ENCODE measurements at regions of chr17 and their contacts with region 1.

Region 1: DNA sequence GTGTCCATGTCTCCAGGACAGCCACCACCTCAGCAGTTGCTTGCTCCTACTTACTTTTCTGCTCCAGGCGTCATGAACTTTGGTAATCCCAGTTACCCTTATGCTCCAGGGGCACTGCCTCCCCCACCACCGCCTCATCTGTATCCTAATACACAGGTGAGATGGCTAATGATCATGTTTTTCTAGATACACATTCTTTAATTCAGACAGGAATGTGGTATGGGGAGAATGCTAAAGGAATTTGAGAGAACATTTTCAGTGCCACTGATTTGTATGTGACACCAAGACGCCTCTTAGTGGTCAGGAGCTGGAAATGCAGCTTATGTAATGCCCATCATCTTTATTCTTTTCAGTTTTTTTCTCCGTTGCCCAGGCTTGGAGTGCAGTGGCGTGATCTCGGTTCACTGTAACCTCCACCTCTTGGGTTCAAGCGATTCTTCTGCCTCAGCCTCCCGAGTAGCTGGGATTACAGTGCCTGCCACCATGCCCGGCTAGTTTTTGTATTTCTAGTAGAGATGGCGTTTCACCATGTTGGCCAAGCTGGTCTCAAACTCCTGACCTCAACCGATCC is 8.9 kb upstream of the RAPGEFL1 start:
- DNase-seq: peak; percentile 74
- ATAC-seq: peak; percentile 89
- H3K4me3 ChIP-seq: no peak overlapping the region
- H3K4me3 Mint-ChIP-seq: no peak overlapping the region
- H3K27ac ChIP-seq: no peak overlapping the region
- H3K27ac Mint-ChIP-seq: peak overlapping the region; percentile 53
- H3K4me1 ChIP-seq: no peaks in the 10 kb centered on the region
- H3K4me1 Mint-ChIP-seq: peaks cover 4% of the 10 kb centered on the region
- H3K27me3 ChIP-seq: no peaks in the 10 kb centered on the region
- H3K27me3 Mint-ChIP-seq: no peaks in the 10 kb centered on the region
- CTCF ChIP-seq: peak; percentile 77

Region 2: DNA sequence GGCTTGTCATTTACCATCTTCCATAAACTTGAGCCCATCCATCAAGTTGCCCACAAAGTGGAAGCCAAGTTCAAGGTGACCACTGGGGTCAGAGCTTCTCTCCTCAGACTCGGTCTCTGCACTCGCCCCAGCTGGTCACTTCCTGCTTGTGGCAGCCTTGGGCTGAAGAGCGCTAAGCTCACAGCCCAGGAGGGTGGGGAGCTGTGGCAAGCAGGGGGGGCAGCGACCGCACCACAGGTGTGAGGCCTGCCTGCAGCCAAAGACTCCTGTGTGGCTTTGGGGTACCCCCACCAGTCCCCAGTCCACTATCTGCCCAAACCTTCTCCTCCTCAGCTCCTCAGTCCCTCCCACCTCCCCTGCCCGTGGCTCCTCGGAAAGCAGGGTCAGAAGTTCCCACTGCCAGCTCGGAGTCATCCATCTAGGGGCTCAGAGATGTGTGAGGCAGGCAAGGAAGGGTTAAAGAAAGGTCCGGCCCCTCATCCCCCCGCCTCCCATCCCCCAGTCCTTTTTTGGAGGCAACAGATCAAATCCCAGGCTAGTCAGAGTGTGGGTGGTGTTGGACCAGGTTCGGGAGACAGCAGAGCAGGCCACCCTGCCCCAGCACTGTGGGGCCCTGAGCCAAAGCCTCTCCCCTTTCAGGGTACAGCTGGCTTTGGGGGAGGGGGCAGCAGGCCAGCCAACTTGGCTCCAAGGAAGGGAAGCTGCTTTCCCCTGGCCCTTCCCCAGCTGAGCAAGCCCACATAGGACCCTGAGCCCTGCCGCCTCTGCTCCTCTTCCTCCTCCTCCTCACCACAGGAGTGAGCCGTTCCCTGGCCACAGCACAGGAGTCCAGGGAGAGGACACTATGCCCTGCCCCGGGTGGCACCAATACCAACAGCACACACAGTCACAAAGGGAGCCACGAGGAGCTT is 149.9 kb before region 1 on chr17:
- CTCF ChIA-PET with region 1: interaction called, 17 read pairs
- POLR2A ChIA-PET with region 1: interaction called, 3 read pairs
- intact Hi-C with region 1: loop called (anchors 1 kb)
- DNase-seq: no peak
- ATAC-seq: no peak
- H3K4me3 ChIP-seq: no peak overlapping the region
- H3K4me3 Mint-ChIP-seq: no peak overlapping the region
- H3K27ac ChIP-seq: no peak overlapping the region
- H3K27ac Mint-ChIP-seq: no peak overlapping the region
- H3K4me1 ChIP-seq: peaks cover 0 to 3% of the 10 kb centered on the region in 2 donors
- H3K4me1 Mint-ChIP-seq: no peaks in the 10 kb centered on the region
- H3K27me3 ChIP-seq: no peaks in the 10 kb centered on the region
- H3K27me3 Mint-ChIP-seq: no peaks in the 10 kb centered on the region
- CTCF ChIP-seq: no peak

Region 3: GRCh38 chr17:40062329-40063186 is 105.8 kb before region 1 on chr17 and contains the start of gene THRA:
- CTCF ChIA-PET with region 1: interaction called, 7 read pairs
- POLR2A ChIA-PET with region 1: no interaction called
- intact Hi-C with region 1: loop called (anchors 2 kb)
- DNase-seq: peak; percentile 85
- ATAC-seq: peak; percentile 92
- H3K4me3 ChIP-seq: peak within 1 kb of the TSS; percentile 53 to 96 (median 95)
- H3K4me3 Mint-ChIP-seq: peak within 1 kb of the TSS; percentile 91
- H3K27ac ChIP-seq: peak within 1 kb of the TSS; percentile 59 to 67
- H3K27ac Mint-ChIP-seq: peak within 1 kb of the TSS; percentile 93
- H3K4me1 ChIP-seq: peaks cover 17 to 23% of the 10 kb centered on the region in 2 donors
- H3K4me1 Mint-ChIP-seq: peaks cover 39% of the 10 kb centered on the region
- H3K27me3 ChIP-seq: peaks cover 0 to 6% (median 1%) of the 10 kb centered on the region in 4 experiments
- H3K27me3 Mint-ChIP-seq: peaks cover 6% of the 10 kb centered on the region
- CTCF ChIP-seq: no peak
- total RNA-seq, gene THRA: 16.8 and 17.1 TPM in 2 replicates

Region 4: GRCh38 chr17:40121181-40122135 is 46.9 kb before region 1 on chr17 and contains the start of gene MSL1:
- CTCF ChIA-PET with region 1: interaction called, 204 read pairs
- POLR2A ChIA-PET with region 1: no interaction called
- intact Hi-C with region 1: no loop called
- DNase-seq: peak; percentile 90
- ATAC-seq: peak; percentile 71
- H3K4me3 ChIP-seq: peak within 1 kb of the TSS; percentile 50 to 81 (median 77)
- H3K4me3 Mint-ChIP-seq: peak within 1 kb of the TSS; percentile 86
- H3K27ac ChIP-seq: peak within 1 kb of the TSS; percentile 55 to 79
- H3K27ac Mint-ChIP-seq: peak within 1 kb of the TSS; percentile 82
- H3K4me1 ChIP-seq: peaks cover 21 to 23% of the 10 kb centered on the region in 2 donors
- H3K4me1 Mint-ChIP-seq: peaks cover 32% of the 10 kb centered on the region
- H3K27me3 ChIP-seq: no peaks in the 10 kb centered on the region
- H3K27me3 Mint-ChIP-seq: no peaks in the 10 kb centered on the region
- CTCF ChIP-seq: no peak
- total RNA-seq, gene MSL1: 125 and 129 TPM in 2 replicates

Region 5: GRCh38 chr17:40191237-40192208 is 23.2 kb after region 1 on chr17:
- CTCF ChIA-PET with region 1: interaction called, 21 read pairs
- POLR2A ChIA-PET with region 1: no interaction called
- intact Hi-C with region 1: no loop called
- DNase-seq: peak; percentile 87
- ATAC-seq: peak; percentile 89
- H3K4me3 ChIP-seq: peak overlapping the region; percentile 17 to 76 (median 60)
- H3K4me3 Mint-ChIP-seq: peak overlapping the region; percentile 99
- H3K27ac ChIP-seq: no peak overlapping the region
- H3K27ac Mint-ChIP-seq: peak overlapping the region; percentile 89
- H3K4me1 ChIP-seq: peaks cover 11 to 17% of the 10 kb centered on the region in 2 donors
- H3K4me1 Mint-ChIP-seq: peaks cover 23% of the 10 kb centered on the region
- H3K27me3 ChIP-seq: no peaks in the 10 kb centered on the region
- H3K27me3 Mint-ChIP-seq: no peaks in the 10 kb centered on the region
- CTCF ChIP-seq: peak; percentile 79

Region 6: DNA sequence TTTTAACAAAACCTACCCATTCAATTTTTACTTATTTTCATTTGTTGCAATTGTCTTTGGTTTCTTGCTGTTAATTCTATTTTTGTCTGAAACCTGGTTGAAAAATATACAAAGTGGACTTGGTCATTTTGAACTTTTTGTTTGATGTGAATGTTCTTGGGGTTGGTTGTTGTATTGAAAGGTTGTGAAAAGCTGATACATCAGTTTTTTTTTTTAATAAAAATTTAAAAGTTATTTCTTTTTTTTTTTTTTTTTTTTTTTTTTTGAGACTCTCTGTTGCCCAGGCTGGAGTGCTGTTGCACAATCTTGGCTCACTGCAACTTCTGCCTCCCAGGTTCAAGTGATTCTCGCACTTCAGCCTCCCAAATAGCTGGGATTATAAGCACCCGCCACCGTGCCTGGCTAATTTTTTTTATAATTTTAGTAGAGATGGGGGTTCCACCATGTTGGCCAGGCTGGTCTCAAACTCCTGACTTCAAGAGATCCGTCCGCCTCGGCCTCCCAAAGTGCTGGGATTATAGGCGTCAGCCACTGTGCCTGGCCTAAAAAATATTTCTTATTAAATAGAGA is 79.7 kb after region 1 on chr17:
- CTCF ChIA-PET with region 1: no interaction called
- POLR2A ChIA-PET with region 1: no interaction called
- intact Hi-C with region 1: no loop called
- DNase-seq: no peak
- ATAC-seq: no peak
- H3K4me3 ChIP-seq: no peak overlapping the region
- H3K4me3 Mint-ChIP-seq: no peak overlapping the region
- H3K27ac ChIP-seq: no peak overlapping the region
- H3K27ac Mint-ChIP-seq: no peak overlapping the region
- H3K4me1 ChIP-seq: no peaks in the 10 kb centered on the region
- H3K4me1 Mint-ChIP-seq: peaks cover 28% of the 10 kb centered on the region
- H3K27me3 ChIP-seq: no peaks in the 10 kb centered on the region
- H3K27me3 Mint-ChIP-seq: no peaks in the 10 kb centered on the region
- CTCF ChIP-seq: no peak